Aorta (tissue), 5 donors: ENCODE measurements at regions of chr20 and their contacts with region 1.

Region 1: GRCh38 chr20:4956200-4956810 is 45.0 kb downstream of the SLC23A2 start:
- DNase-seq: no peak
- ATAC-seq: peak; percentile 69
- H3K4me3 ChIP-seq: no peak overlapping the region
- H3K27ac ChIP-seq: no peak overlapping the region
- H3K4me1 ChIP-seq: peaks cover 0 to 2% of the 10 kb centered on the region in 2 donors
- H3K27me3 ChIP-seq: no peaks in the 10 kb centered on the region

Region 2: DNA sequence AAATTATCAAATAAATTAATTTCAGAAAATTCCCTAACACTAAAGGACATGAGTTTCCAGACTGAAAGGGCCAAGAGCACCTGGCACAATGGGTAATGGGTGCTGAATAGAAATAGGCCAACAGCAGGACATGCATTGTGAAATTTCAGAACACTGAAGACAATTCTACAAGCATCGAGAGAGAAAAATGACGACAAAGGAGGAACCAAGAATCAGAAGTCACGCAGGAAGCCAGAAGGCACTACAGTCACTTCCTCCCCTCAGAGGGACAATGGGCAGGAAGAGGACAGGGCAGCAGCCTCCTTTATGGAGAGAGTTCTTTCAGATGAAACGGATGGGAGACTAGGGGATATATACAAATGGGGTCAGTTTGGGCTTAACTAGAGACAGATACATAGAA is 133.9 kb after region 1 on chr20:
- intact Hi-C with region 1: loop called in 1 of 2 experiments (anchors 10 kb)
- DNase-seq: peak in 1 of 2 donors; percentile 53
- ATAC-seq: no peak
- H3K4me3 ChIP-seq: no peak overlapping the region
- H3K27ac ChIP-seq: no peak overlapping the region
- H3K4me1 ChIP-seq: no peaks in the 10 kb centered on the region
- H3K27me3 ChIP-seq: no peaks in the 10 kb centered on the region

Region 3: GRCh38 chr20:5100684-5101347 is 144.5 kb after region 1 on chr20:
- intact Hi-C with region 1: loop called (anchors 5 to 10 kb)
- DNase-seq: peak; percentile 81 to 92
- ATAC-seq: peak; percentile 84
- H3K4me3 ChIP-seq: no peak overlapping the region
- H3K27ac ChIP-seq: no peak overlapping the region
- H3K4me1 ChIP-seq: no peaks in the 10 kb centered on the region
- H3K27me3 ChIP-seq: no peaks in the 10 kb centered on the region